Esophagus muscularis mucosa (tissue), 4 donors: ENCODE measurements at regions of chr2 and their contacts with region 1.

Region 1: GRCh38 chr2:169694113-169694903 is at the starts of genes CFAP210 and PHOSPHO2:
- DNase-seq: peak; percentile 100
- H3K4me3 ChIP-seq: peak within 1 kb of the TSS; percentile 68 to 91 (median 87)
- H3K27ac ChIP-seq: peak within 1 kb of the TSS; percentile 86 to 90 (median 88)
- H3K4me1 ChIP-seq: peaks cover 11 to 21% (median 18%) of the 10 kb centered on the region in 4 donors
- H3K27me3 ChIP-seq: no peaks in the 10 kb centered on the region
- CTCF ChIP-seq: no peak
- EP300 ChIP-seq: no peak
- POLR2A ChIP-seq: peak; percentile 23
- total RNA-seq, gene CFAP210: 0.80 TPM in 1 of 4 donors, not detected in the others
- total RNA-seq, gene PHOSPHO2: 3.3 to 18.7 (median 6.6) TPM

Region 2: DNA sequence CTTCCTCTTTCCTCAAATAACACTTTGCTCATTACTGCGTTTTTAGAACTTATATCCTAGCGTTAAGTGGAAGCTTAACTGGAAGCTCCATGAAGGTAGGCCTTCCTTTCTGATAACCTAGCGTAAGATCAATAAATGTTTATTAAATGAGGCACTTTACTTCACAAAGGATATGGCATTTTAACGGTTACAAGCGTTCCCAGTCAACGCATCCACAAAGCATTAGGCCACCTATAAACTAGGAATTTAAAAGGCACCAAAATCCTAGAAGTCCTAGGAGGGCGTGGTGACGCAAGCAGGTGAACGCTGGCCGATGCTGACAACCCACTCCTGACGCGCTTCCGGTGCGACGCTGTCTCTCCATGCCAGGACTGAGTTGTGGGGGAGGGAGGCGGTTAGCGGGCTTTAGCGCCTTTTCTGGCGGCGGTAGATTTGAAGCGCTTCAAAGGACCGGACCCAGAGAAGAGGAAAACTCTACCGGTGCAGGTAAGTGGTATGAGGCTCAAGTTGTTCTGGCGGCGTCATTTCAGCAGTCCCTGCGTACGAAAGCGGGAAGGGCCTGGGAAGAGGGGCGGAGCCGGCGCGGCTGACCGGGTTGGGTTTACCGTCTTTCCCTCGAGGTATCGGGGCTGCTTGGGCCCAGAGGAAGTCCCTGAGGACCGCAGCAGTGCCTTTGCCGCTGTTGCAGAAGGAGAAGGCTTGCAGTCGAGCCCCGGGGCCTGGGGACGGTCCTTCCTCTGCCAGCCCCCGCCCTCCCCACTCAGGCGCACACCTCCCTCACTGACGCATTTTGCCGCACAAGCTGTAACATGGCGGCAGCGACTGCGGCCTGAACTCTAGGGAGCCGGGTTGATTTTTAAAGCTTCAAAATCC is 110.1 kb before region 1 on chr2 and contains the start of gene PPIG:
- intact Hi-C with region 1: loop called (anchors 10 kb)
- DNase-seq: peak; percentile 98
- H3K4me3 ChIP-seq: peak within 1 kb of the TSS; percentile 68 to 87 (median 77)
- H3K27ac ChIP-seq: peak within 1 kb of the TSS; percentile 94 to 96 (median 95)
- H3K4me1 ChIP-seq: peaks cover 26 to 35% (median 28%) of the 10 kb centered on the region in 4 donors
- H3K27me3 ChIP-seq: no peaks in the 10 kb centered on the region
- CTCF ChIP-seq: no peak
- EP300 ChIP-seq: no peak
- POLR2A ChIP-seq: peak; percentile 11
- total RNA-seq, gene PPIG: 26.5 to 48.6 (median 34.5) TPM

Region 3: GRCh38 chr2:169734169-169734847 is 40.0 kb after region 1 on chr2:
- intact Hi-C with region 1: loop called (anchors 5 kb)
- DNase-seq: no peak
- H3K4me3 ChIP-seq: peak overlapping the region; percentile 56 to 80 (median 70)
- H3K27ac ChIP-seq: peak overlapping the region; percentile 78 to 80 (median 80)
- H3K4me1 ChIP-seq: peaks cover 5 to 53% (median 44%) of the 10 kb centered on the region in 4 donors
- H3K27me3 ChIP-seq: peaks cover 0 to 2% (median 0%) of the 10 kb centered on the region in 4 donors
- CTCF ChIP-seq: no peak
- EP300 ChIP-seq: no peak
- POLR2A ChIP-seq: no peak

Region 4: GRCh38 chr2:169840747-169841142 is 146.4 kb after region 1 on chr2:
- intact Hi-C with region 1: no loop called
- DNase-seq: no peak
- H3K4me3 ChIP-seq: no peak overlapping the region
- H3K27ac ChIP-seq: no peak overlapping the region
- H3K4me1 ChIP-seq: peaks cover 23 to 43% (median 41%) of the 10 kb centered on the region in 4 donors
- H3K27me3 ChIP-seq: no peaks in the 10 kb centered on the region
- CTCF ChIP-seq: no peak
- EP300 ChIP-seq: no peak
- POLR2A ChIP-seq: no peak

Region 5: DNA sequence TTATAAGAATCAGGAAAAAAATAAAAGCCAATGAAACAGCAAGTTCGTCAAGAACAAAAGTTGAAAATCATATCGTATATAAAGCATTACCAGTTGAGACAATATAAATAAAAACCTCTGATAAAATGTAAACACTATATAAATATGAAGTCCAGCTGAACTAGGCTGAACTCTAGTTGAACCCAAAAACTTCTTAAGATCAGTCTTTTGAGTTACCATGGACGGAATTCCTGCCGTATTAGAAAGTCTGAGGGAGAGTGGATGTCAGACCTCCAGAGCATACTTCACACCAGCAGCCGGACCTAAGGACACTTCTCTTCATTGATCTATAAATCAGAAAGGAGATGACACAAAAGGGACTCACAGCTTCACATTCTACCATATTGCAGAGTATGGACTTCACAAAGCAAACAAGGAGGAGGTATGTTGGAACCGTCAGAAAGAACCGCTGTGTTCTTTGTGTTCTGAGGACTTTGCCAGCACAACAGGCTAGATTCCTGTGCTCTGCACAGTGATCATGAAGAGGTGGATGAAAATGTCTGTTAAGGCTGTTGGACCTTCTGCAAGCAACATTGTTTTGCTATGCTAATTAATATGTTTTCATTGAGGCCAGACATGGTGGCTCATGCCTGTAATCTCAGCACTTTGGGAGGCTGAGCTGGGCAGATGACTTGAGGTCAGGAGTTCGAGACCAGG is 953.6 kb after region 1 on chr2:
- intact Hi-C with region 1: no loop called
- DNase-seq: no peak
- H3K4me3 ChIP-seq: no peak overlapping the region
- H3K27ac ChIP-seq: no peak overlapping the region
- H3K4me1 ChIP-seq: no peaks in the 10 kb centered on the region
- H3K27me3 ChIP-seq: no peaks in the 10 kb centered on the region
- CTCF ChIP-seq: no peak
- EP300 ChIP-seq: no peak
- POLR2A ChIP-seq: no peak